HepG2 (cell line): ENCODE measurements at regions of chrX and their contacts with region 1.

Region 1: DNA sequence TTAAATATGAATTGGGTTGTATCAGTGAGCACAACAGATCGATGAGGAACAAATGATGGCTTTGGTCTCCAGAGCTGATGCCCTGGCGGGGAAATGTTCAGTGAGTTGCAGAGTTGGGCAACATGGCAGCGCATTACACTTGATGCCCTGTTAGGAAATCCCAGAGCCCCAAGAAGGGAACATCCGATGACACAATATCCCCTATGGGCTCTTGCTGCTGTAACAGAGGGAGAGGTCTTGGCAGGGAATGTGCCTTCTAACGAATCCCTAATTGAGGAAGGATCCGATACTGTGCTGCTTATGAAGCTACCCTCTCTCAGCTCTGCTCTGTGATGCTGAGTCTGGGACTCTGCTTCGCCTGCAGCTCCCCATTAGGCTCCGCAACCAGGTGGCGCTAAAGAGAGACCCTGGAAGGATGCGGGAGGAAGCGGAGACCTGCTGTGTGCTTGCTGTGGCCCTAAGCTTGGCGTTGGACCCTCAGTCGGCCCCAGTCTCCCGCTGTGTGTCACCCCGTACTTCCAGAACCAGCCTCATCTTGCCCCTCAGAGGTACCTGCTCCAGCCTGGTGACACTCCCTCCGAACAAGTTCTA is 38.9 kb downstream of the PDHA1 start:
- DNase-seq: peak; percentile 14
- ATAC-seq: peak; percentile 91
- H3K4me3 ChIP-seq: no peak overlapping the region
- H3K27ac ChIP-seq: no peak overlapping the region
- H3K4me1 ChIP-seq: no peaks in the 10 kb centered on the region
- H3K27me3 ChIP-seq: no peaks in the 10 kb centered on the region
- CTCF ChIP-seq: peak; percentile 72
- EP300 ChIP-seq: no peak
- POLR2A ChIP-seq: no peak
- RAD21 ChIP-seq: no peak

Region 2: DNA sequence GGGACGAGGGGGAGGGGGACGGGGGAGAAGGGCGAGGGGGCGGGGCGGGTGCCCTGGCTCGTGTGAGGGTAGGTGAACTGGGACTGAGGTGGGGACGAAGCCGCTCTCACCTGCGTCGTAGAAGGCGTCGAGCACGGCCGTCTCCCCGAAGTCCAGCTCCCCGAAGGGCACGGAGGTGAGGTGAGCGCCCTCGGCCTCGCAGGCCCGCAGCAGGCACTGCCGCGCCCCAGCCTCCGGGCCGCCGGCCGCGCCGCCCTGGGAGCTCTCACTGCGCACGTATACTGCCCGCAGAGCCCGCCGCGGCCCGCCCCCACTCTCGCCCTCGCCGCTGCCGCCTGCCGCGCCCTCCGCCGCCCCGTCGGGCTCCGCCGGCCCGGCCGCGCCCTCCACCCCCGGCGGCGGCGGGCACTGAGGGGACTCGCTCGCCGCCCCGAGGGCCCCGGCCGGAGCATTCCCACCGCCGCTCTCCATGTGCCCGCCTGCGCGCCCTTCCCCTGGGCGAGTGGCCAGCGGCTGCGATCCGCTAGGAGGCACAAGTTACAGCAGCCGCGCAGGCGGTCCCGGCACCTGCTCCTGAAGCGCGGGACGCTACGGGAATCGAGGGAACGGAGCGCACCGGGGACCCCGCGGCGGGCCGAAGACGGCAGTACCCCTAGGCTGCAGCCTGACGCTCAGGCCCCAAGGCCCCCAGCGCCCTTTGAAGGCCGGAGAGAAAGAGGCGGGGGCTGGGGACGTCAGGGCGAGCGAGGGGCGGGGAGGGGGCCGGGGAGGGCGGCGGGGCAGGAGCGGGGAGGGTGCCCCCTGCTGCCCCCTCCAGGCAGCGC is 132.4 kb after region 1 on chrX and contains the start of gene MAP3K15:
- CTCF ChIA-PET with region 1: no interaction called
- POLR2A ChIA-PET with region 1: no interaction called
- in situ Hi-C with region 1: no loop called
- intact Hi-C with region 1: loop called (anchors 5 kb)
- DNase-seq: peak; percentile 13
- ATAC-seq: peak; percentile 87
- H3K4me3 ChIP-seq: peak within 1 kb of the TSS; percentile 60 to 62 (median 61); a peak in 4 of 6 replicates
- H3K27ac ChIP-seq: no peak within 1 kb of the TSS
- H3K4me1 ChIP-seq: peaks cover 14% of the 10 kb centered on the region
- H3K27me3 ChIP-seq: no peaks in the 10 kb centered on the region
- CTCF ChIP-seq: peak; percentile 33
- EP300 ChIP-seq: no peak
- POLR2A ChIP-seq: peak in 1 of 2 experiments; percentile 41; a peak in 1 of 4 replicates
- RAD21 ChIP-seq: no peak
- total RNA-seq, gene MAP3K15: 3.4 and 3.9 TPM in 2 replicates